IMR-90 (cell line): ENCODE measurements at regions of chr4 and their contacts with region 1.

Region 1: GRCh38 chr4:144174401-144175067 is 34.0 kb upstream of the GYPA start:
- DNase-seq: peak; percentile 59
- ATAC-seq: peak; percentile 72
- H3K4me3 ChIP-seq: no peak overlapping the region
- H3K27ac ChIP-seq: no peak overlapping the region
- H3K4me1 ChIP-seq: no peaks in the 10 kb centered on the region
- H3K27me3 ChIP-seq: no peaks in the 10 kb centered on the region
- CTCF ChIP-seq: peak; percentile 56
- POLR2A ChIP-seq: no peak
- RAD21 ChIP-seq: peak; percentile 68

Region 2: GRCh38 chr4:144754562-144755410 is 580.3 kb after region 1 on chr4:
- CTCF ChIA-PET with region 1: no interaction called
- POLR2A ChIA-PET with region 1: no interaction called
- dilution Hi-C with region 1: no loop called
- in situ Hi-C with region 1: loop called (anchors 25 kb)
- intact Hi-C with region 1: loop called (anchors 1 kb)
- DNase-seq: peak; percentile 49
- ATAC-seq: peak; percentile 70
- H3K4me3 ChIP-seq: no peak overlapping the region
- H3K27ac ChIP-seq: no peak overlapping the region
- H3K4me1 ChIP-seq: no peaks in the 10 kb centered on the region
- H3K27me3 ChIP-seq: no peaks in the 10 kb centered on the region
- CTCF ChIP-seq: peak; percentile 73
- POLR2A ChIP-seq: no peak
- RAD21 ChIP-seq: peak; percentile 80

Region 3: GRCh38 chr4:145061318-145061920 is 886.9 kb after region 1 on chr4:
- CTCF ChIA-PET with region 1: no interaction called
- POLR2A ChIA-PET with region 1: no interaction called
- dilution Hi-C with region 1: no loop called
- in situ Hi-C with region 1: loop called (anchors 10 kb)
- intact Hi-C with region 1: loop called (anchors 1 kb)
- DNase-seq: peak; percentile 67
- ATAC-seq: peak; percentile 77
- H3K4me3 ChIP-seq: no peak overlapping the region
- H3K27ac ChIP-seq: no peak overlapping the region
- H3K4me1 ChIP-seq: no peaks in the 10 kb centered on the region
- H3K27me3 ChIP-seq: no peaks in the 10 kb centered on the region
- CTCF ChIP-seq: peak; percentile 55
- POLR2A ChIP-seq: no peak
- RAD21 ChIP-seq: peak; percentile 67

Region 4: GRCh38 chr4:145216535-145216934 is 1042.0 kb after region 1 on chr4:
- CTCF ChIA-PET with region 1: no interaction called
- POLR2A ChIA-PET with region 1: no interaction called
- dilution Hi-C with region 1: no loop called
- in situ Hi-C with region 1: no loop called
- intact Hi-C with region 1: loop called (anchors 10 kb)
- DNase-seq: peak; percentile 44
- ATAC-seq: no peak
- H3K4me3 ChIP-seq: no peak overlapping the region
- H3K27ac ChIP-seq: no peak overlapping the region
- H3K4me1 ChIP-seq: no peaks in the 10 kb centered on the region
- H3K27me3 ChIP-seq: peaks cover 3% of the 10 kb centered on the region; the same call in 1 of the 2 replicates
- CTCF ChIP-seq: peak; percentile 79
- POLR2A ChIP-seq: no peak
- RAD21 ChIP-seq: peak; percentile 84

Region 5: GRCh38 chr4:145609481-145610427 is 1435.2 kb after region 1 on chr4:
- CTCF ChIA-PET with region 1: no interaction called
- POLR2A ChIA-PET with region 1: no interaction called
- dilution Hi-C with region 1: no loop called
- in situ Hi-C with region 1: no loop called
- intact Hi-C with region 1: loop called (anchors 2 kb)
- DNase-seq: peak; percentile 77
- ATAC-seq: peak; percentile 85
- H3K4me3 ChIP-seq: no peak overlapping the region
- H3K27ac ChIP-seq: no peak overlapping the region
- H3K4me1 ChIP-seq: no peaks in the 10 kb centered on the region
- H3K27me3 ChIP-seq: 0 out of 2 replicates have a peak, but pooled peaks cover 2% of the 10 kb centered on the region
- CTCF ChIP-seq: peak; percentile 84
- POLR2A ChIP-seq: no peak
- RAD21 ChIP-seq: peak; percentile 83